Activated CD4-positive, alpha-beta T cell treated with anti-CD3 and anti-CD28 coated beads, Interleukin-2, amount 10 ng/mL, durations not matched to agents 7 days and 5 days (primary cell): ENCODE measurements at regions of chr6 and their contacts with region 1.

Region 1: GRCh38 chr6:137910424-137910834 is 43.4 kb downstream of the TNFAIP3 start:
- DNase-seq: no peak
- H3K4me3 Mint-ChIP-seq: no peak overlapping the region
- H3K27ac Mint-ChIP-seq: no peak overlapping the region
- H3K4me1 Mint-ChIP-seq: peaks cover 52% of the 10 kb centered on the region
- H3K27me3 Mint-ChIP-seq: no peaks in the 10 kb centered on the region

Region 2: DNA sequence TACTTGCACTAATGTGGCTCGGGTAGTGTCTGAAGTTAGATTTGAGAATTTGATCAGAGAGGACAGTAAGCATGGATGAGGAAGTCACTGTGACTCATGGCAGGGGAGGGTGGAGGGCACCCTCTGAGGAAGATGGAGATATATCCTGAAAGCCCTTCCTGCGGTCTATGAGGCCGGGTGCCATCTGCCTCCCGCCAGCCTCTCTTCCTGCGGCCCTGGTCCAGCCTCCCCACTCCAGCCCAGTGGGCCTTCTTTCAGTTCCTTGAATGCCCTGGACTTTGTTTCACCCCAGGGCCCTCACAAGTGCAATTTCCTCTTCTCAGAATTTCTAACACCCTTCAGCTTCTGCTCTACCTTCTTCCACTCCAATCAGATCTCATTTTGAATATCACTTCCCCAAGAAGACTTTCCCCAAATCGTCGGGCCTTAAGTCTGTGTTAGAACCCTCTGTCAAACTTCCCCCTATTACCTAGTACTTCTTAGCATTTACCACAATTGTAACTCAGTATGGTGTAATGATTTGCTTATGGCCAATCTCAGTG is 63.6 kb before region 1 on chr6:
- CTCF ChIA-PET with region 1: no interaction called
- POLR2A ChIA-PET with region 1: no interaction called
- DNase-seq: no peak
- H3K4me3 Mint-ChIP-seq: no peak overlapping the region
- H3K27ac Mint-ChIP-seq: no peak overlapping the region
- H3K4me1 Mint-ChIP-seq: no peaks in the 10 kb centered on the region
- H3K27me3 Mint-ChIP-seq: no peaks in the 10 kb centered on the region

Region 3: GRCh38 chr6:137927777-137928218 is 17.4 kb after region 1 on chr6:
- CTCF ChIA-PET with region 1: interaction called, 13 read pairs
- POLR2A ChIA-PET with region 1: no interaction called
- DNase-seq: peak; percentile 83
- H3K4me3 Mint-ChIP-seq: peak overlapping the region; percentile 48
- H3K27ac Mint-ChIP-seq: peak overlapping the region; percentile 86
- H3K4me1 Mint-ChIP-seq: peaks cover 41% of the 10 kb centered on the region
- H3K27me3 Mint-ChIP-seq: no peaks in the 10 kb centered on the region

Region 4: DNA sequence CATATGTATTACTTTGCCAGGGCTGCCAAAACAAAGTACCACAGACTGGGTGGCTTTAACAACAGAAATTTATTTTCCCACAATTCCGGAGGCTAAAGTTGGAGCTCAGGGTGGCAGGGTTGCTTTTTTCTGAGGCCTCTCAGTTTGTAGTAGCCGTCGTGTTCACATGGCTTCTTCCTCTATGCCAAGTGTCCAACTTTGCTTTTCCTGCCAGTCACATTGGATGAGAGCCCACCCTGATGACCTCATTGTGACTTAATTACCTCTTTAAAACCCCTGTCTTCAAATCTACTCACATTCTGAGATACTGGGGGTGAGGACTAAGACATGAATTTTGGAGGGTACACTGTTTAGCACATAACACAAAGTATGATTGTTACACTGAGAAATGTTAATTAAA is 875.6 kb after region 1 on chr6:
- CTCF ChIA-PET with region 1: no interaction called
- POLR2A ChIA-PET with region 1: no interaction called
- DNase-seq: no peak
- H3K4me3 Mint-ChIP-seq: no peak overlapping the region
- H3K27ac Mint-ChIP-seq: no peak overlapping the region
- H3K4me1 Mint-ChIP-seq: peaks cover 5% of the 10 kb centered on the region
- H3K27me3 Mint-ChIP-seq: no peaks in the 10 kb centered on the region